Dorsolateral prefrontal cortex (tissue), 120 donors: ENCODE measurements at regions of chr13 and their contacts with region 1.

Region 1: DNA sequence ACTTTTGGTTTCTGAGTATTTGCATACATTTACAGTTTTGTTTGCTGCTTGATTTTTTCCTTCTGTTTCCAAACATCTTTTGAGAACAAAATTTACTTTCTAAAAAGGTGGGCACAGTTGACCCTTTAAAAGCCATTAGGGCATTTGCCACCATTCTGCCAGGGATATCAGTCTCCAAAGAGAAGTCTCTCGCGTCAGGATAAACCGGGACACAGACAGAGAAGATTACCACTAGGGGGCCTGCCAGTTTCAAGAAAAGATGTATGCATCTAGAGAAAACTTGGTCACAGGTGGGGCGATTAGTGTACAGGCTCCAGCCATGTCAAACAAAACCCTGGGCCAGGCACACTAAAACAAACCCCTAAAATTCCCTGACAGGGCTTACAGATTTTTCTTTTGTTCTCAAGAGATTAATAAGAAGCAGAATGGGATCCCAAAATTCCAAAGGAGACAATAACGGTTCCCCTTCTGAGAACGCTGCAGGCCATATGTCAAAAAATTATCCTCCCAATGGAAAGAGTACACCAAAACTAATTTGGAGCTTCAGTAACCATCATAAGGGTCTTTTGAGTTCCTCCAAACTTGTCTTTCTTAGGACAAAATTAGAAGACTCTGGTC is 10.7 kb upstream of the PABPC3 start:
- DNase-seq: peak in 7 of 10 donors; percentile 41 to 82 (median 66)
- H3K4me3 ChIP-seq: peak overlapping the region in 21 of 59 donors; percentile 3 to 42 (median 18)
- H3K27ac ChIP-seq: peak overlapping the region in 56 of 59 donors; percentile 9 to 89 (median 71)
- H3K27me3 ChIP-seq: no peaks in the 10 kb centered on the region
- CTCF ChIP-seq: peak; percentile 59 to 89 (median 78)

Region 2: GRCh38 chr13:25042151-25042870 is 42.9 kb before region 1 on chr13:
- intact Hi-C with region 1: loop called in 1 of 2 experiments (anchors 5 kb)
- DNase-seq: no peak
- H3K4me3 ChIP-seq: no peak overlapping the region
- H3K27ac ChIP-seq: no peak overlapping the region
- H3K27me3 ChIP-seq: peaks cover 0 to 48% (median 14%) of the 10 kb centered on the region in 45 donors
- CTCF ChIP-seq: no peak

Region 3: GRCh38 chr13:25727253-25727652 is 642.0 kb after region 1 on chr13:
- intact Hi-C with region 1: no loop called
- DNase-seq: no peak
- H3K4me3 ChIP-seq: no peak overlapping the region
- H3K27ac ChIP-seq: no peak overlapping the region
- H3K27me3 ChIP-seq: no peaks in the 10 kb centered on the region
- CTCF ChIP-seq: no peak